IMR-90 (cell line): ENCODE measurements at regions of chr1 and their contacts with region 1.

Region 1: DNA sequence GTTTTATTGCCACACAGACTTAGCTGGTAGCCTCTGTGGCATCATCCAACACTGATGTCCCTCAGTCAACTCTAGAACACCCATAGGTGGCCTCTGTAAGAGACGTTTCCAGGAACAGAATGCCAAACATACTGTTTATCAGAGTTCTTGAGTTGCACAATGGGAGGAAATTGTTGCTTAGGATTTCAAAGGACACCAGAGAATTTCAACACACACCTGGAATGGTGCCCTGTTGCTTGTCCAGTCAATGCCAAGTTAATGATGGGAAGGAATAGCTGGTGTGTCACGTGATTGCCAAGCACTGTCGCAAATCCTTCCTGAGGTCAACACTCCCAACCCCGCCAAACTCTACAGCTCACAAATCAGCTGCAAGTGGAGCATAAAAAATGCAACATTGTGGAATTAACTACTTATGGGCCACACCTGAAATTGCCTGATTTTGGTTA is 28.6 kb upstream of the DUSP23 start:
- DNase-seq: peak; percentile 4
- ATAC-seq: no peak
- H3K4me3 ChIP-seq: no peak overlapping the region
- H3K27ac ChIP-seq: no peak overlapping the region
- H3K4me1 ChIP-seq: no peaks in the 10 kb centered on the region
- H3K27me3 ChIP-seq: no peaks in the 10 kb centered on the region
- CTCF ChIP-seq: no peak
- POLR2A ChIP-seq: no peak
- RAD21 ChIP-seq: no peak

Region 2: GRCh38 chr1:159483501-159483900 is 268.7 kb before region 1 on chr1:
- CTCF ChIA-PET with region 1: no interaction called
- POLR2A ChIA-PET with region 1: interaction called, 10 read pairs
- dilution Hi-C with region 1: no loop called
- in situ Hi-C with region 1: no loop called
- intact Hi-C with region 1: no loop called
- DNase-seq: no peak
- ATAC-seq: no peak
- H3K4me3 ChIP-seq: no peak overlapping the region
- H3K27ac ChIP-seq: no peak overlapping the region
- H3K4me1 ChIP-seq: no peaks in the 10 kb centered on the region
- H3K27me3 ChIP-seq: no peaks in the 10 kb centered on the region
- CTCF ChIP-seq: no peak
- POLR2A ChIP-seq: no peak
- RAD21 ChIP-seq: no peak